ENCODE measurements at regions of chr22 and their contacts with region 1.

Region 1: GRCh38 chr22:38272373-38273134 is at the start of gene TMEM184B:
- H3K4me3 Mint-ChIP-seq: peak within 1 kb of the TSS; percentile 89
- H3K27ac Mint-ChIP-seq: peak within 1 kb of the TSS; percentile 90
- H3K4me1 Mint-ChIP-seq: peaks cover 54% of the 10 kb centered on the region
- H3K27me3 Mint-ChIP-seq: peaks cover 29% of the 10 kb centered on the region

Region 2: DNA sequence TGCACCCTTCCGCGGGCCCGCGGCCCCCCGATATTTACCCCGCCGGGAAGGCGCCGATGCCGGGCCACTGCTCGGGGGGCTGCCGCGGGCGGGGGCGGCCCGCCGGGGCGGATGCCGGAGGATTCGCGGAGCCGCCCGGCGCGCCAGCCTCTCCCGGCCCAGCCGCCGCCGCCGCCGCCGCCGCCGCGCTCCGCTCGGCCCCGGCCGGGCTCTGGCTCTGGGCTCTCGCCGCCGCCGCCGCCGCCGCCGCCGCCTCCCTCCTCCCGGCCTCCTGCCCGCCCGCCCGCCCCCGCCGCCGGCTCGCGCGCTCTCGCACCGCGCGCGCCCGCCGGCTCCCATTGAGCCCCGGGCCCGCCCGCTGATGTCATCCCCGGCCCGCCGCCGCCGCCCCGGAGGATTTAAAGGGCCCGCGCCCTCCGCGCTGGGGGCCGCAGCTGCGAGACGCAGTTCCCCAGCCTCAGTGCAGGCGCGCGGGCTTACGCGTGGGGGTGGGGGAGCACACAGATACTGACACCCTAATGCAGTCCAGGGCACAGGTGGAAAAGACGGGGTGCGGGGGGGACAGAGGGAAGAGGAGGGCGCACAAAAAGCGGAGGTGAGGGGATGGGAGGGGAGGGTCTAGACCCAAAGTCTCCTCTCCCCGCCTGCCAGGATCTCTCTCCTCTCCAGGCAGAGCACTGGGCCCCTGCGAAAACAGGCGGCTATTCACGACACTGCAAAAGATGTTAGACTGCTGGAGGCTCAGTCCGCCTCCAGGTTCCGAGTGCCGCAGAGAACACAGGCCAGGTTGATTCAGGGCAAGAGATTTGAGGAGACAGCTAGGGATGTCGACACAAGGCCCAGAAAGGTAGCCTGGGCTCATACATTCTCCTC is 44.8 kb after region 1 on chr22 and contains the start of gene CSNK1E:
- intact Hi-C with region 1: loop called (anchors 2 kb)
- H3K4me3 Mint-ChIP-seq: peak within 1 kb of the TSS; percentile 84
- H3K27ac Mint-ChIP-seq: peak within 1 kb of the TSS; percentile 93
- H3K4me1 Mint-ChIP-seq: peaks cover 59% of the 10 kb centered on the region
- H3K27me3 Mint-ChIP-seq: peaks cover 45% of the 10 kb centered on the region